ENCODE measurements at regions of chr1 and their contacts with region 1.

Region 1: DNA sequence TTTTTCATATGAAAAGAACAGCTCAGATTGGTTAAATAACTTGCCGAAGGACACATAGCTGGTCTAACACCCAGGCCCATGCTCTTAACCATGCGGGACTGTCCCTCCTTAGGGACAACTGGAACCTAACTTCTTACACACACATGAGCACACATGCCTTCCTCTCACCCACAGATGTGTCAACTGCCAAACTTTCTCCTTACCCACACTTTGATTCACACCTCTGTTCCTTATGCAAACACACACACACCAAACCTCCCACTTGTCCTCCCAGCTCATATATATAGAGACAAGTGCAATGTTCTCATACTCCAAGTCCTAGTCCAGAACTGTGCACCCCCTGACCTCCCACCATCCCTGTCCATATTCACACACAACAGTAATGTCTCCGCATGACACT is 4.3 kb downstream of the RAB25 start:
- DNase-seq: no peak
- CTCF ChIP-seq: no peak

Region 2: GRCh38 chr1:155934097-155934935 is 130.9 kb before region 1 on chr1 and contains the start of gene KHDC4:
- CTCF ChIA-PET with region 1: interaction called, 27 read pairs
- POLR2A ChIA-PET with region 1: interaction called, 3 read pairs
- DNase-seq: peak; percentile 95
- CTCF ChIP-seq: no peak

Region 3: GRCh38 chr1:156025877-156026276 is 39.3 kb before region 1 on chr1:
- CTCF ChIA-PET with region 1: interaction called, 27 read pairs
- POLR2A ChIA-PET with region 1: interaction called, 3 read pairs
- DNase-seq: peak; percentile 71
- CTCF ChIP-seq: peak; percentile 76

Region 4: DNA sequence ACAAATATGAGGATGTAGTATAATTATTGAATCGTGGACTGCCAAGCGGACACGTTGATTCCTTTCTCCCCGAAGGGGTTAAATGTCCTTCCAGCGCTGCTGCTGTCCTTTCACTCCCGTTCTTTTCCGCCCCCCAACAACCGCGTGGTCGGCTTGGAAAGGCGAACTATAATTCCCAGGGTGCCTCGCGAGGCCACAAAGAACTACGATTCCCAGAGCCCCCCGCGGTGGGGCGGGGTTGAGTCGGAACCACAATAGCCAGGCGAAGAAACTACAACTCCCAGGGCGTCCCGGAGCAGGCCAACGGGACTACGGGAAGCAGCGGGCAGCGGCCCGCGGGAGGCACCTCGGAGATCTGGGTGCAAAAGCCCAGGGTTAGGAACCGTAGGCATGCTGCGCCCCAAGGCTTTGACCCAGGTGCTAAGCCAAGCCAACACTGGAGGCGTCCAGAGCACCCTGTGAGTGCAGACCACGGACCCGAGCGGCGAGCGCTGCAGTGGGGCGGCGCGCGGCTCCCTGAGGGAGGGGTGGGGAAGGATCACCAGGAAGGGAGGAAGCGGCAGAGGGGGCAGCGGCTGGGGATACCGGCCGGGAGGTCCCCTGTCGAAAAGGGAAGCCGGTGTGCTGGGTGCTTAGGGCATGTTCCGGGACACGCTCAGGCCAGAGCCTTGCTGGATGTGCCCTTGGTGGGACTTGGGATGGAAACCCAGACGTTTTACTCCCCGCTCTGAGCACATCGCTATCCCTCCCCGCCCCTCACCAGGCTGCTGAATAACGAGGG is 10.5 kb before region 1 on chr1 and contains the start of gene LAMTOR2:
- CTCF ChIA-PET with region 1: interaction called, 11 read pairs
- POLR2A ChIA-PET with region 1: no interaction called
- DNase-seq: peak; percentile 94
- CTCF ChIP-seq: no peak

Region 5: GRCh38 chr1:156076501-156077429 is 11.6 kb after region 1 on chr1:
- CTCF ChIA-PET with region 1: interaction called, 23 read pairs
- POLR2A ChIA-PET with region 1: no interaction called
- DNase-seq: peak; percentile 83
- CTCF ChIP-seq: no peak

Region 6: DNA sequence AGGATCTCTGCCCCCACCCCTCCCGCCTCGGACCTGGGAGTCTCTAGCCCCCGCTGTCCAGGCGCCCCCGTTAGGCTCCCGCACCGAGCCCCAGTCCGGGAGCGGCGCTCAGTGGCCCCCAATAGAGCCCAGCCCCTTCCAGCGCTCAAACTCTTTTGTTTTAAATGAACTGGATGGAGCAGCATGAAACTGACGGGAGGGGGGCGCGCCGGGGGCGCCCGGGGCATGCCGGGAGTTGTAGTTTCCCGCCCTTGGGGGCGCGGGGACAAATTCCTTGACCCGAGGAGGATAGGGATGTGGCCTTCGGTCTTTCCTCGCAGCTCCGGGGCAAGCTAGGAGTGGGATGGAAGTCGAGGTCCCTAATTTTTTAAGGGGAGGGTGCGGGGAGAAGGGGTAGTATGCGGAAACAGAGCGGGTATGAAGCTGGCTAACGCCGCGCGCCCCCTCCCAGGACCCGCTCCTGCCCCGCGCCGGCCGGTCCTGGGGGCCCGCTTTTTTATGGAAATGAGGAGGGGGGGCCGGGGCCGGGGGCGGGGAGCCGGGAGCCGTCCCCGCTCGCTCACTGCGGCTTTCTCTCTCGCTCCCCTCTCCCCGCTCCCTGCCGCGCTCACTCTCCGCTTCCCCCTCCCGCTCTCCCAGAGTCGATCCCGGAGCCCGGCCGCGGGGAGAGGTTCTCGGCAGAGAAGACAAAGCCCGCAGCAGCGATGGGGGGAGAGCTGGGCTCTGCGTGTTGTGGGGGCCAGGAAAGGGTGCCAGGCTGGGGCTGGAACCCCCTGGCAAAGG is 17.3 kb after region 1 on chr1 and contains the start of gene MEX3A:
- CTCF ChIA-PET with region 1: interaction called, 10 read pairs
- POLR2A ChIA-PET with region 1: no interaction called
- DNase-seq: peak; percentile 85
- CTCF ChIP-seq: no peak

Region 7: GRCh38 chr1:156259805-156260204 is 194.6 kb after region 1 on chr1:
- CTCF ChIA-PET with region 1: no interaction called
- POLR2A ChIA-PET with region 1: no interaction called
- DNase-seq: no peak
- CTCF ChIP-seq: peak; percentile 17